Activated naive CD4-positive, alpha-beta T cell treated with anti-CD3 and anti-CD28 coated beads for 36 hours (primary cell): ENCODE measurements at regions of chr6 and their contacts with region 1.

Region 1: GRCh38 chr6:29834564-29835436 is 7.2 kb downstream of the HLA-G start:
- DNase-seq: peak; percentile 67
- H3K4me3 Mint-ChIP-seq: no peak overlapping the region
- H3K27ac Mint-ChIP-seq: no peak overlapping the region
- H3K4me1 Mint-ChIP-seq: peaks cover 5% of the 10 kb centered on the region
- H3K27me3 Mint-ChIP-seq: peaks cover 49% of the 10 kb centered on the region

Region 2: DNA sequence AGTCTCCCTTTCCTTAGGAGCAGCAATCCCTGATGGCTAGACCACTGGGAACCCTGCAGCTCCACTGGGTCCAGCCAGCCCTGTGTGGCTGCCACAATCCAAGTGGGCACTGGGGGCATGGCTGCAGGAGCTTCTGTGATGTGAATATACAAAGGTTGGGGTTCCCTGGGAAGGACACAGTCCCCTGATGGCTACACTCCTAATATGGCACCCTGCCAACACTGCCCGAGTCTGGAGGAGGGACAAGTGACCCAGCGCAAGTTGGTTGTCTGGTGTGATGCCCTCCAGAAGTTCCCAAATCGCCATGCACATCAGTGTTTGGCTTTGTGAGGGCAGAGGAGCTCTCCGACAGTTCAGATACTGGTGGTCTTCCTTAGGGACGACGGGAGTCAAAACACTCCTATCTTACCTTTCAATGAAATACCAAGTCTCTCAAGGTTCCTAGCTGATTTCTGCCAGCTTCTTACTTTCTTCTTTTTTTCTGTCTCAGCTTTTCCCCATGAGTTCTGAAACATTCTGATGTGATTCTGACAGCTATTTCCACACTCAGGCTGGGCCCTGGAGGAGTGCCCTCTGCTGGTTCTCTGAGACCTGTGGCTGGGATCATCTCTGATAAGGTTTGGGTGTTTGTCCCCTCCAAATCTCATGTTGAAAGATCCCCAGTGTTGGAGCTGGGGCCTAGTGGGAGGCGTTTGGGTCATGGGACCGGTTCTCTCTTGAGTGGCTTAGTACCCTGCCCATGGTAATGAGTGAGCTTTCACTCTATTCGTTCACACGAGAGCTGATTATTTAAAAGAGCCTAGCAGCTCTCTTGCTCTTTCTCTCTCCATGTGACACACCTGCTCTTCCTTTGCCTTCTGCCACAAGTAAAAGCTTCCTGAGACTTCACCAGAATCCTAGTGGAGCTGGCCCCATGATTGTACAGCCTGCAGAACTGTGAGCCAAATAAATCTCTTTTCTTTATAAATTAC is 138.4 kb before region 1 on chr6:
- CTCF ChIA-PET with region 1: interaction called, 15 read pairs
- intact Hi-C with region 1: no loop called
- DNase-seq: no peak
- H3K4me3 Mint-ChIP-seq: no peak overlapping the region
- H3K27ac Mint-ChIP-seq: no peak overlapping the region
- H3K4me1 Mint-ChIP-seq: no peaks in the 10 kb centered on the region
- H3K27me3 Mint-ChIP-seq: no peaks in the 10 kb centered on the region

Region 3: DNA sequence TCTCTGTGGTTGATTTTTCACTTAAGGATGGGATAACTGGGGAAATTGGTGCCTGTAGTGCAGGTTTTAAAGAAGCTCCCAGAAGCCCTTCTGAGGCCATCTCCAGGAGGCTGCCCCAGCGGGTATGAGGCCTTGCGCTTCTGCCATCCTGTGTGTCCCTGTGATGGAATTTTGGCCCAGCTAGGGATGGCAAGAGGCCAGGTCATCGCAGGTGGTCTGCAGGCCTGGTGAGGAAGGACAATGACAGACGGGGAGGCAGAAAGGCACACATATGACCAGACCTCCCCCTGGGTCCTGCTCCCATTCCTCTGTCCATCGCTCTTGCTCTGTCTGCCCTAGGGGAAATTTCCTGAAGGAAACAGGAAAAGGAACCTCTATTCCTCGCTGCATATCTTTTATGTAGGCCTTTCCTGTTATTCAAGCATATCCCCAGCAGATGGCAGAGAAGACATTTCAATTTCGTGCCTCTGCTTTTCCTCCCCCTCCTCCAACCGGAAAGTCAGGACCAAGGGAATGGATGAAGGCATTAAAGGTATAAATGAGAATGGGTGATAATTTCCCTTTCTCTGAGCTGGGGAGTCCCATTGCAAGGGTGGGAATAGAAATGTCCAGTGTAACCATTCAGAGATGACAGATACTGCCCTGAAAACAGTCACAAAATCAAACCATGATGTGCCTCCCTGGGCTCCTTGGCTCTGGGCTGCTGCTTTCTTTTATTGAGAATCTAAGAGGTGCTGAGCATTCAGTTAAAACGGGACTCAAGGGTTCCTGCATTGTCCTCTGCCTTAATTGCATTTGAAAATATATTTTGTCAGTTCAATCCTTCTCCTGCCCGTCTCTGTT is 129.2 kb before region 1 on chr6:
- CTCF ChIA-PET with region 1: interaction called, 15 read pairs
- intact Hi-C with region 1: loop called (anchors 1 kb)
- DNase-seq: no peak
- H3K4me3 Mint-ChIP-seq: no peak overlapping the region
- H3K27ac Mint-ChIP-seq: no peak overlapping the region
- H3K4me1 Mint-ChIP-seq: peaks cover 48% of the 10 kb centered on the region
- H3K27me3 Mint-ChIP-seq: peaks cover 12% of the 10 kb centered on the region

Region 4: GRCh38 chr6:29737707-29738630 is 96.8 kb before region 1 on chr6:
- CTCF ChIA-PET with region 1: interaction called, 51 read pairs
- intact Hi-C with region 1: loop called (anchors 1 kb)
- DNase-seq: peak; percentile 85
- H3K4me3 Mint-ChIP-seq: no peak overlapping the region
- H3K27ac Mint-ChIP-seq: no peak overlapping the region
- H3K4me1 Mint-ChIP-seq: peaks cover 11% of the 10 kb centered on the region
- H3K27me3 Mint-ChIP-seq: no peaks in the 10 kb centered on the region

Region 5: GRCh38 chr6:29955783-29956182 is 121.0 kb after region 1 on chr6:
- CTCF ChIA-PET with region 1: no interaction called
- intact Hi-C with region 1: no loop called
- DNase-seq: no peak
- H3K4me3 Mint-ChIP-seq: no peak overlapping the region
- H3K27ac Mint-ChIP-seq: no peak overlapping the region
- H3K4me1 Mint-ChIP-seq: peaks cover 15% of the 10 kb centered on the region
- H3K27me3 Mint-ChIP-seq: no peaks in the 10 kb centered on the region